ENCODE measurements at regions of chr4 and their contacts with region 1.

Region 1: GRCh38 chr4:48779998-48780742 is at the start of gene FRYL:
- DNase-seq: peak; percentile 98
- H3K4me3 Mint-ChIP-seq: peak within 1 kb of the TSS; percentile 95
- H3K27ac Mint-ChIP-seq: peak within 1 kb of the TSS; percentile 97
- H3K4me1 Mint-ChIP-seq: peaks cover 35% of the 10 kb centered on the region
- H3K27me3 Mint-ChIP-seq: no peaks in the 10 kb centered on the region
- total RNA-seq, gene FRYL: 68.2 and 69.6 TPM in 2 replicates

Region 2: GRCh38 chr4:48340965-48341775 is 439.0 kb before region 1 on chr4 and contains the start of gene SLAIN2:
- intact Hi-C with region 1: loop called (anchors 1 kb)
- DNase-seq: peak; percentile 98
- H3K4me3 Mint-ChIP-seq: peak within 1 kb of the TSS; percentile 98
- H3K27ac Mint-ChIP-seq: peak within 1 kb of the TSS; percentile 97
- H3K4me1 Mint-ChIP-seq: peaks cover 61% of the 10 kb centered on the region
- H3K27me3 Mint-ChIP-seq: no peaks in the 10 kb centered on the region
- total RNA-seq, gene SLAIN2: 60.4 and 67.1 TPM in 2 replicates

Region 3: GRCh38 chr4:48681856-48682255 is 98.3 kb before region 1 on chr4:
- intact Hi-C with region 1: loop called (anchors 1 kb)
- DNase-seq: no peak
- H3K4me3 Mint-ChIP-seq: no peak overlapping the region
- H3K27ac Mint-ChIP-seq: peak overlapping the region; percentile 55
- H3K4me1 Mint-ChIP-seq: peaks cover 24% of the 10 kb centered on the region
- H3K27me3 Mint-ChIP-seq: no peaks in the 10 kb centered on the region

Region 4: DNA sequence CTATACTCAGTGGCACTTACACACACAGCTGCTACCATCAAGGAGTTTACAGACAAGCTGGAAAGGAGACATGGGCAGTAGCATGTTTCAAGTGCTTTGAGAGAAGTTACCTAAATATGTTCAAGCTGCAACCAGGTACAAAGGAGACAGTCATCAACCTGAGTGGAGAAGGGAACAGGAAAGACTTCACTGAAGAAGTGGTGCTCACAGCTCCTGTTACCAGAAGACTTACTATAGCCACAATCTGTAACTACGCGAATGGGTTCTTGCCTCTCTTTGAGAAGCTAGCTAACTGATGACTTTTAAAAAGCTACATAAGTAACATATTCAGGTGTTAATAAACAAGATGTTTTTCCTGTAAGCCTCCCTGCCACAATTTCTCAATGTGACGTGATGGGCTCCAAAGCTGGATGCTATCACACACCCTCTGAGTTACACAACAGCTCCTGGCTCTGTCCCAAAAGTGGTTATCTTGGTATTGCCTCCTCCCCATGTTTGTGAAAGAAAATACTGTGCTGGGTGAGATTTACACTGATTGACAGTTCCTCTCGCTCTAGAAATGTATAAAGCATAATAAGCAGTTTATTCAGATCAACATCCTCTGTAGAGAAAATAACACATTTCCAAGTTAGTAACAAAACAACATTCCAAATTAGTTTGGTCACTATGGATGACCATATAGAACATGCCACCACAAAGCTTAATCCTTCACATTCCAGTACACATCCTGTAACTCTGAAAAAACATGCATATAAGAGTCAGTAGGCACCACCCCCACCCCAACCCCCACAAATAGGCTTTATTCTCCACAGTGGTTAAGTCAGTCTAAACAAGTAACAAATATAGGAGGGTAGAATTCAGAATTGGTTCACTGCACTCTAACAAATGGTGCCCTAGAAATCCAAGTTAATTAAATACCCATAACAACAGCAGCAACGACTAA is 81.9 kb before region 1 on chr4:
- intact Hi-C with region 1: loop called (anchors 2 kb)
- DNase-seq: no peak
- H3K4me3 Mint-ChIP-seq: no peak overlapping the region
- H3K27ac Mint-ChIP-seq: no peak overlapping the region
- H3K4me1 Mint-ChIP-seq: peaks cover 29% of the 10 kb centered on the region
- H3K27me3 Mint-ChIP-seq: no peaks in the 10 kb centered on the region

Region 5: GRCh38 chr4:48830706-48831531 is 50.7 kb after region 1 on chr4 and contains the start of gene OCIAD1:
- intact Hi-C with region 1: loop called (anchors 1 kb)
- DNase-seq: peak; percentile 94
- H3K4me3 Mint-ChIP-seq: peak within 1 kb of the TSS; percentile 100
- H3K27ac Mint-ChIP-seq: peak within 1 kb of the TSS; percentile 100
- H3K4me1 Mint-ChIP-seq: peaks cover 20% of the 10 kb centered on the region
- H3K27me3 Mint-ChIP-seq: peaks cover 8% of the 10 kb centered on the region
- total RNA-seq, gene OCIAD1: 114 and 116 TPM in 2 replicates

Region 6: DNA sequence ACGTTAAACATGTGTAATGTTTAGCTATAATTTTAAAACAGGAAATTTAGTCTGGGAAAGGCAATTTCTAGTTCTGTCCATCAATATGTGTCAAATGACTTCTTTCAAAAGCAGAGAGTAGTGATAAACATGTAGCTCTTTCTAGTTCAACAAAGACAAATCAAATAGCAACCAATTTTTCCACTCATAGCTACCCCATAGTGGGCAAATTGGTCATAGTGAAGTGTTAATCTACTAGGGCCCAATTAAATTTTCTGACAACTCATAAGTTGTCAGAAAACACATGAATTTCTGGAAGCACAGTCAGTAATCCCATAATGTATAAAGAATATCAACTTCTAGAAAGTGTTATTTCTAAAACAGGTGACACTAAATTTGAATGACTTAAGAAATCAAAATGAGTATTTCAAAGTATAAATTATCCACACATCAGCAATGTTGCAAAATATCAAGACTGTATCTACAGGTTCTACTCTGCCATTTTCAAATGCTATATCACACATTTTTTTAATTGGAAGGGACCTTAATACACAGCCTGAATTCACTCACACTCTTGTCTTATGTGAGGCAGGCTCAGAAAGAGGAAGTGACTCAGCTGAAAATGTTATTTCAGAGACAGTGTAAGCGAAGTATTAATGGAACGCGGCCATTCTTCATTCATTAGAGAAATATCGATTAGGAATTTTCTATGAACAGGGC is 118.7 kb after region 1 on chr4:
- intact Hi-C with region 1: no loop called
- DNase-seq: no peak
- H3K4me3 Mint-ChIP-seq: no peak overlapping the region
- H3K27ac Mint-ChIP-seq: peak overlapping the region; percentile 28
- H3K4me1 Mint-ChIP-seq: peaks cover 24% of the 10 kb centered on the region
- H3K27me3 Mint-ChIP-seq: no peaks in the 10 kb centered on the region

Measured in activated T-helper 2 cell treated with anti-CD3 and anti-CD28 coated beads, Interferon-gamma antibody, Interleukin-2, Interleukin-4, amounts not matched to agents 10 μg/mL and 5 μg/mL and 100 μg/mL, durations not matched to agents 14 hours and 24 hours and 36 hours (primary cell).